PC-9 (cell line): ENCODE measurements at regions of chr1 and their contacts with region 1.

Region 1: DNA sequence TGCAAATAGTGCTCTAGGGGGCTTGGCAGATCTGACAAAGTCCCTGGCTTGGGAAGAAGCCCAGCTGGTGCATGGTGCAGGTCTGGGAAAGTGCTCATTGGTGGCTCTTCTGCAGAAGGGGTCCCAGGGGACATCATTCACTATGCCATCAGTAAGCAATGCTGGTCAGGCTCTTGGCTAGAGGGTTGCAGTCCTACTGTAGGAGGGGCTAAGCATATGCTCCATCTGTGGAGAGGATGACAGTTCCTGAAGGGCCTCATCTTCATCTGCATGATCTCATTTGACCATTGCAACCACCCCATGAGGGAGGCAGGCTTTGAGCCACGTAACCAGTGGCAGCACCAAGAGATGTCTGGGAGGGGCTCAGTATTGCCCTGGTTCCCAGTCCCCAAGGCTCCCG is 31.5 kb upstream of the VASH2 start:
- DNase-seq: no peak
- H3K4me3 ChIP-seq: no peak overlapping the region
- H3K27ac ChIP-seq: no peak overlapping the region
- H3K4me1 ChIP-seq: no peaks in the 10 kb centered on the region
- H3K27me3 ChIP-seq: peaks cover 23% of the 10 kb centered on the region
- CTCF ChIP-seq: no peak

Region 2: GRCh38 chr1:212721388-212722247 is 197.2 kb before region 1 on chr1:
- CTCF ChIA-PET with region 1: no interaction called
- POLR2A ChIA-PET with region 1: interaction called, 18 read pairs
- intact Hi-C with region 1: no loop called
- DNase-seq: peak; percentile 61 to 89
- H3K4me3 ChIP-seq: peak overlapping the region; percentile 1; the same call in 1 of the 2 replicates
- H3K27ac ChIP-seq: 0 out of 2 replicates have a peak overlapping the region, but pooled peaks have one; percentile 4
- H3K4me1 ChIP-seq: peaks cover 15% of the 10 kb centered on the region
- H3K27me3 ChIP-seq: no peaks in the 10 kb centered on the region
- CTCF ChIP-seq: no peak

Region 3: GRCh38 chr1:212981571-212982328 is 62.9 kb after region 1 on chr1:
- CTCF ChIA-PET with region 1: no interaction called
- POLR2A ChIA-PET with region 1: no interaction called
- intact Hi-C with region 1: no loop called
- DNase-seq: no peak
- H3K4me3 ChIP-seq: no peak overlapping the region
- H3K27ac ChIP-seq: no peak overlapping the region
- H3K4me1 ChIP-seq: no peaks in the 10 kb centered on the region
- H3K27me3 ChIP-seq: no peaks in the 10 kb centered on the region
- CTCF ChIP-seq: no peak